Activated CD4-positive, alpha-beta T cell treated with anti-CD3 and anti-CD28 coated beads, Interleukin-2, amount 10 ng/mL, durations not matched to agents 24 days and 14 days (primary cell): ENCODE measurements at regions of chr1 and their contacts with region 1.

Region 1: GRCh38 chr1:246329900-246330299 is 177.2 kb downstream of the SMYD3 start:
- DNase-seq: peak; percentile 82
- H3K4me3 Mint-ChIP-seq: peak overlapping the region; percentile 36
- H3K27ac Mint-ChIP-seq: peak overlapping the region; percentile 73
- H3K4me1 Mint-ChIP-seq: peaks cover 39% of the 10 kb centered on the region
- H3K27me3 Mint-ChIP-seq: no peaks in the 10 kb centered on the region

Region 2: GRCh38 chr1:244835276-244836134 is 1494.4 kb before region 1 on chr1 and contains the start of gene COX20:
- intact Hi-C with region 1: loop called (anchors 10 kb)
- DNase-seq: peak; percentile 97
- H3K4me3 Mint-ChIP-seq: peak within 1 kb of the TSS; percentile 91
- H3K27ac Mint-ChIP-seq: peak within 1 kb of the TSS; percentile 99
- H3K4me1 Mint-ChIP-seq: peaks cover 43% of the 10 kb centered on the region
- H3K27me3 Mint-ChIP-seq: no peaks in the 10 kb centered on the region
- total RNA-seq, gene COX20: 28.6 and 30.0 TPM in 2 replicates

Region 3: DNA sequence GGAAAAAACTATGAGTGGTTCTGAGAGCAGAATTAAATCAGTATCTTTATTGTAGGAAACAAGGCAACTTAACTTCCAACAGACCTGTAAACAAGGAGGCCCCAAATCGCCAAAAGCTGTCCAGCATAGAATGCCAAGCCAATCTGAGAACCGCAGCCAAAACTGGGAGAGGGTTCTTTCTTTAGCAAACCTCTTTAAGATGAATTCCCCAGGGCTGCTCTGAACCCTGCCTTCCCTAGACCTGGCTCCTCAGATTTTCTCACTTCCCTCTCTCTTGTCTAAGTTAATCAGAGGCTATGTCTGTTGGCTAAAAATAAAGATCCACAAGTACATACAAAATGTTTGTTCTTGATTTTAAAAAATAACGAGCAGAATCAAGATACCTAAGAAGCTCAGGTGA is 35.8 kb after region 1 on chr1:
- intact Hi-C with region 1: loop called (anchors 1 kb)
- DNase-seq: no peak
- H3K4me3 Mint-ChIP-seq: no peak overlapping the region
- H3K27ac Mint-ChIP-seq: no peak overlapping the region
- H3K4me1 Mint-ChIP-seq: peaks cover 12% of the 10 kb centered on the region
- H3K27me3 Mint-ChIP-seq: no peaks in the 10 kb centered on the region

Region 4: GRCh38 chr1:246699095-246699735 is 369.3 kb after region 1 on chr1:
- intact Hi-C with region 1: loop called (anchors 2 kb)
- DNase-seq: peak; percentile 93
- H3K4me3 Mint-ChIP-seq: peak overlapping the region; percentile 22
- H3K27ac Mint-ChIP-seq: peak overlapping the region; percentile 32
- H3K4me1 Mint-ChIP-seq: peaks cover 8% of the 10 kb centered on the region
- H3K27me3 Mint-ChIP-seq: no peaks in the 10 kb centered on the region

Region 5: GRCh38 chr1:247415423-247416361 is 1085.8 kb after region 1 on chr1 and contains the start of gene NLRP3:
- intact Hi-C with region 1: loop called (anchors 10 kb)
- DNase-seq: peak; percentile 76
- H3K4me3 Mint-ChIP-seq: peak within 1 kb of the TSS; percentile 79
- H3K27ac Mint-ChIP-seq: peak within 1 kb of the TSS; percentile 7
- H3K4me1 Mint-ChIP-seq: peaks cover 25% of the 10 kb centered on the region
- H3K27me3 Mint-ChIP-seq: peaks cover 33% of the 10 kb centered on the region
- total RNA-seq, gene NLRP3: 0.14 and 0.16 TPM in 2 replicates